AG04450 (cell line): ENCODE measurements at regions of chr11 and their contacts with region 1.

Region 1: DNA sequence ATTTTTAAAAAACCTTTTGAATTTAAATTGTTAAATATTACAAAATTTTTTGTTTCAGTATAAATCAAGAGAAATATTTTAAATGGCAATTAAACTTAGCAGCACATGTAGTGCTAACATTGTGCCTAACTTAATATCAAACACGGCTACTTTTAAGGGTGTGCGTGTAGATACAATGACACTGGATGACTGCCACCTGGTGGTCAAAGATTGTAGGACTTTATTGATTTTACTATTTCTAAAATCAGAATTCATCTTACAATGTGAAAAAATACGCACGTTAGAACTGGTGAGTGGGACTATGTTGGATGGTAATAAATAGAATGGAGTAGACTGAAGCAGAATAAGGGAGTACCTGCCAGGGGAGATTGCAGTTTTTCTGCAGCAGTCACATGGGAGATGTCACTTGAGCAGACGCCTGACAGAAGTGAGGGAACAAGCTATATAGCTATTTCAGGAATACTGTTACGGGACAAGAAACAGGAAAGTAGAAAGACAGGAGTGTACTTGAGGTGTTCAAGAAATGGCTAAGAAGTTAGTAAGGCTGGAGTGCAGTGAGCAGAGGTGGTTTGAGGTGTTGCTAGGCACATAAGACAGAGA is 52.9 kb downstream of the UVRAG start:
- DNase-seq: peak; percentile 23
- H3K4me3 ChIP-seq: no peak overlapping the region
- H3K27ac ChIP-seq: no peak overlapping the region
- H3K27me3 ChIP-seq: no peaks in the 10 kb centered on the region
- CTCF ChIP-seq: peak; percentile 63

Region 2: GRCh38 chr11:75802913-75803820 is 64.7 kb before region 1 on chr11:
- CTCF ChIA-PET with region 1: interaction called, 87 read pairs
- POLR2A ChIA-PET with region 1: interaction called, 3 read pairs
- DNase-seq: peak; percentile 37
- H3K4me3 ChIP-seq: no peak overlapping the region
- H3K27ac ChIP-seq: no peak overlapping the region
- H3K27me3 ChIP-seq: peaks cover 3% of the 10 kb centered on the region
- CTCF ChIP-seq: peak; percentile 95

Region 3: DNA sequence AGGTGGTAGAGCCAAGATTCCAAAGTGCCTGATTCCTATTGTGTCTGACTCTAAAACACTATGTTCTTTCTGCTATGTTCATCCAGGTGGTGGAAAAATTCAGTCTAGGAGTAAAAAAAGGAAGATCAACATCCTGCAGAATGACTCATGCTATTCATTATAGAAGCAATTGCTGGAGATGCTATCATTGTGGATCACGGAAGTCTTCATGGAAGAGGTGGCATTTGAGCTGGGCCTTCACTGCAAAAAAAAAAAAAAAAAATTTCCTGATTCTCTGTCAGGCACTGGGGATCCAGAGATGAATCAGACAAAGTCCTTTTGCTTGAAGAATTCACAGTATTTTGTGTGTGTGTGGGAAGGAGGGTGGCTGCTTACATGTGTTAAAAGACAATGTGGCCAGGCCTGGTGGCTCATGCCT is 54.2 kb before region 1 on chr11:
- CTCF ChIA-PET with region 1: interaction called, 11 read pairs
- POLR2A ChIA-PET with region 1: no interaction called
- DNase-seq: no peak
- H3K4me3 ChIP-seq: no peak overlapping the region
- H3K27ac ChIP-seq: no peak overlapping the region
- H3K27me3 ChIP-seq: peaks cover 7% of the 10 kb centered on the region
- CTCF ChIP-seq: no peak

Region 4: GRCh38 chr11:75879737-75880136 is 11.9 kb after region 1 on chr11:
- CTCF ChIA-PET with region 1: interaction called, 13 read pairs
- POLR2A ChIA-PET with region 1: no interaction called
- DNase-seq: no peak
- H3K4me3 ChIP-seq: no peak overlapping the region
- H3K27ac ChIP-seq: no peak overlapping the region
- H3K27me3 ChIP-seq: no peaks in the 10 kb centered on the region
- CTCF ChIP-seq: no peak